Posterior vena cava (tissue), 2 donors: ENCODE measurements at regions of chr2 and their contacts with region 1.

Region 1: GRCh38 chr2:135818937-135819610 is 17.9 kb downstream of the LCT start:
- DNase-seq: no peak

Region 2: GRCh38 chr2:137096693-137097092 is 1277.6 kb after region 1 on chr2:
- intact Hi-C with region 1: loop called in 1 of 2 experiments (anchors 5 kb)
- DNase-seq: no peak

Region 3: DNA sequence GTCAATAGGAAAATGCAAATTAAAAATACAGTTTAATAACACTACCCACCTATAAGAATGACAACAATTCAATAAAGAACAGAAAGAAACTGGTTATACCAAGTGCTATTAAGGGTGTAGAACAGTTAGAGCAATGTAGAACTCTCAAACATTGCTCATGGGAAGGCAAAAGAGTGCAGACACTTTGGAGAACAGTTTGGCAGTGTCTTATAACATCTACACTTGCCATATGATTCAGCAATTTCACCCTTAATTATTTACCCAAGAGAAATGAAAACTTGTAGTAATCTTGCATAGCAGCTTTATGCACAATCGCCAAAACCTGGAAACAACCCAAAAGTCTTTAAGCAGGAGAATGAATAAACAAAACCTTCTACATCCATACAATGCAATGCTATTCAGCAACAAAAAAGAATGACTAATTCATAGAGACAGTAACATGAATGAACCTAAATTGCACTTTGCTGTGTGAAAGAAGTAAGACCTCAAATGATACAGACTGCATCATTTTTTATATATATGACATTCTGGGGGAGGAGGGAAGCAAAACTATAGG is 1401.4 kb after region 1 on chr2:
- intact Hi-C with region 1: no loop called
- DNase-seq: no peak